ENCODE measurements at regions of chr10 and their contacts with region 1.

Region 1: GRCh38 chr10:119320981-119321380 is 113.6 kb downstream of the GRK5 start:
- DNase-seq: no peak
- H3K4me3 ChIP-seq: no peak overlapping the region
- H3K27ac ChIP-seq: no peak overlapping the region
- H3K4me1 ChIP-seq: peaks cover 32% of the 10 kb centered on the region
- H3K27me3 ChIP-seq: no peaks in the 10 kb centered on the region
- CTCF ChIP-seq: no peak

Region 2: GRCh38 chr10:119274519-119275045 is 46.4 kb before region 1 on chr10:
- CTCF ChIA-PET with region 1: no interaction called
- dilution Hi-C with region 1: loop called (anchors 5 kb)
- in situ Hi-C with region 1: no loop called
- intact Hi-C with region 1: no loop called
- DNase-seq: no peak
- H3K4me3 ChIP-seq: no peak overlapping the region
- H3K27ac ChIP-seq: no peak overlapping the region
- H3K4me1 ChIP-seq: peaks cover 10% of the 10 kb centered on the region
- H3K27me3 ChIP-seq: no peaks in the 10 kb centered on the region
- CTCF ChIP-seq: no peak

Region 3: GRCh38 chr10:119290291-119291048 is 30.5 kb before region 1 on chr10:
- CTCF ChIA-PET with region 1: no interaction called
- dilution Hi-C with region 1: no loop called
- in situ Hi-C with region 1: no loop called
- intact Hi-C with region 1: no loop called
- DNase-seq: no peak
- H3K4me3 ChIP-seq: no peak overlapping the region
- H3K27ac ChIP-seq: no peak overlapping the region
- H3K4me1 ChIP-seq: peaks cover 7% of the 10 kb centered on the region
- H3K27me3 ChIP-seq: no peaks in the 10 kb centered on the region
- CTCF ChIP-seq: peak in 1 of 2 donors; percentile 38

Measured in mammary epithelial cell (primary cell).